ENCODE measurements at regions of chr16 and their contacts with region 1.

Region 1: DNA sequence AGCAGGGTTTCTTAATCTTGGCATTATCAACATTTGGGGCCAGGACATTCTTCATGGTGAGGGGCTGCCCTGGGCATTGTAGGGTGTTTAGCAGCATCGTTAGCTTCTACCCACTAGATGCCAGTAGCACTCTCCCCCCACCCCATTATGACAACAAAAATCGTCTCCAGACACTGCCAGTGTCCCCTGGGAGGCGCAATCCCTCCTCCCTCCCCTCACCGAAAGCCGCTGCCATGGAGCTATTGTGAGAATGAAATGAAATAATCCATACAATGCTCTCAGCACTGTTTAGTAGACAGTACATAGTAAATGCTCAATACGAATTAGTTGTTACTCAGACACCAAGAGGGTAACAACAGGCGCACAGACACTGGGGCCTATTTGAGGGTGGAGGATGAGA is 502.9 kb downstream of the NPIPA7 start:
- DNase-seq: no peak
- ATAC-seq: peak; percentile 38; the same call in 1 of the 2 replicates
- H3K4me3 Mint-ChIP-seq: no peak overlapping the region
- H3K27ac Mint-ChIP-seq: no peak overlapping the region
- H3K4me1 Mint-ChIP-seq: peaks cover 27% of the 10 kb centered on the region
- H3K27me3 Mint-ChIP-seq: no peaks in the 10 kb centered on the region; the same call in 1 of the 2 replicates
- CTCF ChIP-seq: no peak

Region 2: GRCh38 chr16:16861546-16861945 is 20.3 kb before region 1 on chr16:
- CTCF ChIA-PET with region 1: interaction called, 16 read pairs
- POLR2A ChIA-PET with region 1: no interaction called
- DNase-seq: peak; percentile 60
- ATAC-seq: peak; percentile 65
- H3K4me3 Mint-ChIP-seq: no peak overlapping the region
- H3K27ac Mint-ChIP-seq: no peak overlapping the region; the same call in 1 of the 2 replicates
- H3K4me1 Mint-ChIP-seq: peaks cover 21% of the 10 kb centered on the region
- H3K27me3 Mint-ChIP-seq: 0 out of 2 replicates have a peak, but pooled peaks cover 3% of the 10 kb centered on the region
- CTCF ChIP-seq: peak; percentile 48